HCT116 (cell line): ENCODE measurements at regions of chr9 and their contacts with region 1.

Region 1: GRCh38 chr9:21252721-21253547 is 13.1 kb upstream of the IFNA14 start:
- DNase-seq: peak; percentile 38
- ATAC-seq: peak; percentile 93
- H3K4me3 ChIP-seq: peak overlapping the region; percentile 23 to 45; a peak in 3 of 4 replicates
- H3K27ac ChIP-seq: no peak overlapping the region
- H3K4me1 ChIP-seq: peaks cover 0 to 4% of the 10 kb centered on the region in 2 experiments; a peak in 1 of 4 replicates
- H3K27me3 ChIP-seq: no peaks in the 10 kb centered on the region
- CTCF ChIP-seq: peak; percentile 67 to 80 (median 72)
- POLR2A ChIP-seq: no peak
- RAD21 ChIP-seq: peak; percentile 77

Region 2: DNA sequence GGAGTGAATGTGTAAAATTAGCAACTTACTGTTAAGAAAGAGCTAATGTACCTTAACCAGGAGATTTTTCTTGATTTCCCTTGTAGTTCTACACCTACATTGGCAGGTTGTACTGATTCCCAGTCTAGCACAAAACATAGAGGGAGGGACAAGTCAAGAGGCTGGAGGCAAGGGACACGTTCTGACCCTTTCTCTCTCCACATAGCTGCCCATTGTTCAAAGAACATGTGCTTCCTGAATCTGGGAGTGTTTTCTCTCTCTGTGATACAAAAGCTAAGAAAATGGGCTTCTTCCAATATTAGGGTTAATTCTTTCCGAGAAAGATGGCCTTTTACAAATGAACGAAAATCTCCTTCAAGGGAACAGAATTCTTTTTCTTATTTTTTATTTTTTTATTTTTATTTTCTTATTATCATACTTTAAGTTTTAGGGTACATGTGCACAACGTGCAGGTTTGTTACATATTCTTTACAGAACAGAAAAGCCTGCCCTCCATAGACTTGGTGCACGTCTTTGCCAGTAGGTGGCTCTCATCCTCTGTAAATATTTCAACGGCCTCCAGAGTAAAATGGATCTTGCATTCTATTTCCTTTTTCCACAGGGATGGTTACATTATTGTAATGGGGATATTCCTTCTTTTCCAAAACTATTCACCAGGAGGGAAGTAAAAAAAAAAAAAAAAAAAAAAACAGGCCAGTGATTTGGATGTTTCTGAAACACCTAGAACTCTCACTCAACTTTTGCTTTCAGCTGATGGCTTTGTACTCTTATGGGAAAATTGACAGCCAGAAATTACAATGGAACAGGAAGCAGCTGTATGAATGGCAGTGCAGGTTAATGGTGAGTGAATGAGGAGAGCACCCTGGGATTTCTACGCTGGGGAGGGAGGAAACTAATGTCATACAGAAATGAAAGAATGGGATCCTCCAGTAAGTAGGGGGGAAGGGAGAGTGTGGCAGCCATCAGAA is 65.3 kb after region 1 on chr9:
- CTCF ChIA-PET with region 1: interaction called, 21 read pairs
- POLR2A ChIA-PET with region 1: no interaction called
- RAD21 ChIA-PET with region 1: no interaction called
- intact Hi-C with region 1: no loop called
- DNase-seq: no peak
- ATAC-seq: peak; percentile 89
- H3K4me3 ChIP-seq: no peak overlapping the region
- H3K27ac ChIP-seq: no peak overlapping the region
- H3K4me1 ChIP-seq: peaks cover 3 to 10% of the 10 kb centered on the region in 2 experiments; a peak in 3 of 4 replicates
- H3K27me3 ChIP-seq: no peaks in the 10 kb centered on the region
- CTCF ChIP-seq: peak; percentile 54 to 68 (median 63); a peak in 5 of 6 replicates
- POLR2A ChIP-seq: no peak
- RAD21 ChIP-seq: peak; percentile 69

Region 3: GRCh38 chr9:21326526-21327139 is 73.7 kb after region 1 on chr9:
- CTCF ChIA-PET with region 1: interaction called, 16 read pairs
- POLR2A ChIA-PET with region 1: no interaction called
- RAD21 ChIA-PET with region 1: no interaction called
- intact Hi-C with region 1: no loop called
- DNase-seq: no peak
- ATAC-seq: peak; percentile 80
- H3K4me3 ChIP-seq: no peak overlapping the region
- H3K27ac ChIP-seq: no peak overlapping the region
- H3K4me1 ChIP-seq: no peaks in the 10 kb centered on the region
- H3K27me3 ChIP-seq: no peaks in the 10 kb centered on the region
- CTCF ChIP-seq: peak; percentile 51 to 81 (median 69); a peak in 5 of 6 replicates
- POLR2A ChIP-seq: no peak
- RAD21 ChIP-seq: peak; percentile 79

Region 4: GRCh38 chr9:21385131-21385670 is 132.3 kb after region 1 on chr9 and contains the start of gene IFNA2:
- CTCF ChIA-PET with region 1: no interaction called
- POLR2A ChIA-PET with region 1: no interaction called
- RAD21 ChIA-PET with region 1: no interaction called
- intact Hi-C with region 1: no loop called
- DNase-seq: no peak
- ATAC-seq: no peak
- H3K4me3 ChIP-seq: no peak within 1 kb of the TSS
- H3K27ac ChIP-seq: no peak within 1 kb of the TSS
- H3K4me1 ChIP-seq: no peaks in the 10 kb centered on the region
- H3K27me3 ChIP-seq: no peaks in the 10 kb centered on the region
- CTCF ChIP-seq: no peak
- POLR2A ChIP-seq: no peak
- RAD21 ChIP-seq: no peak
- total RNA-seq, gene IFNA2: not detected

Region 5: DNA sequence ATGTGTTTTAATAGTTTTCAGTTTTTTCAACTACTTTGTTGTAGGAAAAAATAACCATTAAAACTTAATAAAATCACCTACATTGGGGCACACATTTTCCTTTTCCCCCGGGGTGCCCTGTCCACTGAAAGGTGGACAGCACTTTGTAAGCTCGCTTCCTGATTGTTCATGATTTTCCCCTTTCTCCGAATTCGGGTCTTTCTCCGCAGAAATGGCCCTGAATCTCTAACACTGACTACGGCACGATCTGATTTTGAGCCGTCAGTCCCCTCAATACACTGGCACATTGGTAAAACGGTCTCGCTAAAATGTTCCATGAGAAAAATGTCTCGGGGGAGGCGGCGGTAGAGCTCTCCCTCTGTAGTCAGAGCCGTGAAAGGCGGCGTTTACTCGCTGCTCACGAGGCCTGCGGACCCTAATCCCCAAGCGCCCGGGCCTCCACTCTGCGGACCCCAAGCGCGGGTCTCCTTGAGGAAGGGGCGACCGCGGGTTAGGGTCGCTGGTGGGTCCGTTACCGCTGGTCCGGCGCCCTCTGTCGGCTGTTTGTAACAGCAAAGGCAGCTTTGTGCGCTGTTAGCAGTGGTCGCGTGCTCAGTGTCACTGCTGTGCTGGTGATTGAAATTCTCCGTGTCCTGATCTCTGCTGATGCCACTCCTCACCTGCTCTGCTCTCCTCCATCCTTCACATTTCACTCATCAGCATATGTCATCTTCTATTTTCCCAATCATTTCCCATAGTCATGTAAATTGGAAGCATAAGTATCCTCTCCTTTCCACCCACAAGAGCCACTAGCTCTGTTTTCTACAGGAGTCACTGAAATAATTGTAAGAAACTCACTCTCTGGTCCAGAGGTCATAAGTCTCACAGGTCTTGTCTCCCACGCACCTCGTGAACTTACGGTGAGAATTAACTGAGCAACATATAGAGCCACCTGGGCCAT is 143.1 kb after region 1 on chr9:
- CTCF ChIA-PET with region 1: interaction called, 16 read pairs
- POLR2A ChIA-PET with region 1: no interaction called
- RAD21 ChIA-PET with region 1: interaction called in 1 of 2 experiments, 5 read pairs
- intact Hi-C with region 1: loop called (anchors 1 kb)
- DNase-seq: peak; percentile 21
- ATAC-seq: peak; percentile 84
- H3K4me3 ChIP-seq: peak overlapping the region; percentile 63 to 67
- H3K27ac ChIP-seq: no peak overlapping the region
- H3K4me1 ChIP-seq: peaks cover 0 to 7% of the 10 kb centered on the region in 2 experiments; a peak in 1 of 4 replicates
- H3K27me3 ChIP-seq: no peaks in the 10 kb centered on the region
- CTCF ChIP-seq: peak; percentile 76 to 94 (median 92)
- POLR2A ChIP-seq: no peak
- RAD21 ChIP-seq: peak; percentile 50

Region 6: DNA sequence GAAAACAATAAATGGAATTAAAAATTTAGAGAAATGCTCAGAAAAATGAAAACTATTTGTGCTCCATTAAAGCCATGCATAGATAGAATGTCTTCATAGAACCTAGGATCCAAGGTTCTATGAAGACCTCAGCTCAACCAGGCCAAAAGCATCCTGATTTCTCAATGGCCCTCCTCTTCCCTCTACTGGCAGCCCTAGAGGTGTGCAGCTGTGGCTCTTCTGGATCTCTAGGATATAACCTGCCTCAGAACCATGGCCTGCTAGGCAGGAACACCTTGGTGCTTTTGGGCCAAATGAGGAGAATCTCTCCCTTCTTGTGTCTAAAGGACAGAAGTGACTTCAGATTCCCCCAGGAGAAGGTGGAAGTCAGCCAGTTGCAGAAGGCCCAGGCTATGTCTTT is 202.4 kb after region 1 on chr9:
- CTCF ChIA-PET with region 1: interaction called, 41 read pairs
- POLR2A ChIA-PET with region 1: no interaction called
- RAD21 ChIA-PET with region 1: interaction called in 1 of 2 experiments, 4 read pairs
- intact Hi-C with region 1: loop called (anchors 1 kb)
- DNase-seq: peak; percentile 23
- ATAC-seq: peak; percentile 99
- H3K4me3 ChIP-seq: no peak overlapping the region
- H3K27ac ChIP-seq: no peak overlapping the region
- H3K4me1 ChIP-seq: no peaks in the 10 kb centered on the region
- H3K27me3 ChIP-seq: no peaks in the 10 kb centered on the region
- CTCF ChIP-seq: peak; percentile 69 to 84 (median 77); a peak in 5 of 6 replicates
- POLR2A ChIP-seq: no peak
- RAD21 ChIP-seq: peak; percentile 81

Region 7: GRCh38 chr9:21506626-21507484 is 253.9 kb after region 1 on chr9:
- CTCF ChIA-PET with region 1: interaction called, 4 read pairs
- POLR2A ChIA-PET with region 1: no interaction called
- RAD21 ChIA-PET with region 1: no interaction called
- intact Hi-C with region 1: loop called (anchors 5 kb)
- DNase-seq: no peak
- ATAC-seq: no peak
- H3K4me3 ChIP-seq: no peak overlapping the region
- H3K27ac ChIP-seq: peak overlapping the region; percentile 32; the same call in 1 of the 2 replicates
- H3K4me1 ChIP-seq: peaks cover 44 to 71% of the 10 kb centered on the region in 2 experiments
- H3K27me3 ChIP-seq: no peaks in the 10 kb centered on the region
- CTCF ChIP-seq: no peak
- POLR2A ChIP-seq: no peak
- RAD21 ChIP-seq: no peak

Region 8: GRCh38 chr9:21516796-21517195 is 263.9 kb after region 1 on chr9:
- CTCF ChIA-PET with region 1: interaction called, 13 read pairs
- POLR2A ChIA-PET with region 1: interaction called, 14 read pairs
- RAD21 ChIA-PET with region 1: no interaction called
- intact Hi-C with region 1: no loop called
- DNase-seq: no peak
- ATAC-seq: no peak
- H3K4me3 ChIP-seq: no peak overlapping the region
- H3K27ac ChIP-seq: peak overlapping the region; percentile 4; the same call in 1 of the 2 replicates
- H3K4me1 ChIP-seq: peaks cover 7 to 70% of the 10 kb centered on the region in 2 experiments; a peak in 3 of 4 replicates
- H3K27me3 ChIP-seq: no peaks in the 10 kb centered on the region
- CTCF ChIP-seq: no peak
- POLR2A ChIP-seq: no peak
- RAD21 ChIP-seq: no peak

Region 9: GRCh38 chr9:21933865-21934264 is 680.9 kb after region 1 on chr9:
- CTCF ChIA-PET with region 1: no interaction called
- POLR2A ChIA-PET with region 1: no interaction called
- RAD21 ChIA-PET with region 1: no interaction called
- intact Hi-C with region 1: no loop called
- DNase-seq: no peak
- ATAC-seq: no peak
- H3K4me3 ChIP-seq: no peak overlapping the region
- H3K27ac ChIP-seq: no peak overlapping the region
- H3K4me1 ChIP-seq: peaks cover 8 to 10% of the 10 kb centered on the region in 2 experiments; a peak in 3 of 4 replicates
- H3K27me3 ChIP-seq: no peaks in the 10 kb centered on the region
- CTCF ChIP-seq: no peak
- POLR2A ChIP-seq: no peak
- RAD21 ChIP-seq: no peak